BJ (cell line): ENCODE measurements at regions of chr17 and their contacts with region 1.

Region 1: DNA sequence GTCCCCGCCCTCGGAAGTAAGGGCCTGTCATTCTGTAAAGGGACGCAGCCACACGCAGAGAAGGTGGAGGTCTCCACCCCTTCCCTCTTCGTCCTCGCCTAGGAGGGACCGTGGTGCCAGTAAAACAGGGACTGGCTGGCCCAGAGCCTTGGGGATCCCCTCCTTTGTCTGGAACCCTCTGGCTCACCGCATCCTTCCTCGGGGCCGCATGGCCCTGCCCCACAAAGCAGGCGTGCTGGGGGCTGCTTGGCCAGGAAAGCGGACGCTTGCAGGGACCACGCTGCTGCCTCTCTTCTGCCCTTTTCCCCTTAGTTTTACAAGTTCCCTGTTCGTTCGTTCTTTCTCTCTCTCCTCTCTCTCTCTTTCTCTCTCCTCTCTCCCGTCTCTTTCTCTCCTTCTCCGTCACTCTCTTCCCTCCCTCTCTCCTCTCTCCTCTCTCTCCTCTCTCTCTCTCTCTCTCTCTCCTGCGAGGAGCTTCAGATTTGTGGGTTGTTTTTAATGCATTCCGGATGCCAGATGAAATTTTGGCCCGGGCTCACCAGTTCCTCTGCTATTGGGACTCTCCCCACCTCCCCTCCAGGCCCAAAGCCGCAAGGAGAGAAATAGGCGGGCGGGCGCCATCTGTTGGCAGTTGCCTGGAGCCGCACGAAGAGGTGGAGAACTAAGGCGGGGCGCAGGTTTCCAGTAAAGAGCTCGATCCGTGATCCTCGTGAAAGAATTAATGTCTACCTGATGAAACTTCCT is 35.1 kb upstream of the CDRT4 start:
- DNase-seq: peak; percentile 81
- H3K4me3 ChIP-seq: peak overlapping the region; percentile 23
- H3K27me3 ChIP-seq: no peaks in the 10 kb centered on the region
- CTCF ChIP-seq: peak; percentile 95

Region 2: DNA sequence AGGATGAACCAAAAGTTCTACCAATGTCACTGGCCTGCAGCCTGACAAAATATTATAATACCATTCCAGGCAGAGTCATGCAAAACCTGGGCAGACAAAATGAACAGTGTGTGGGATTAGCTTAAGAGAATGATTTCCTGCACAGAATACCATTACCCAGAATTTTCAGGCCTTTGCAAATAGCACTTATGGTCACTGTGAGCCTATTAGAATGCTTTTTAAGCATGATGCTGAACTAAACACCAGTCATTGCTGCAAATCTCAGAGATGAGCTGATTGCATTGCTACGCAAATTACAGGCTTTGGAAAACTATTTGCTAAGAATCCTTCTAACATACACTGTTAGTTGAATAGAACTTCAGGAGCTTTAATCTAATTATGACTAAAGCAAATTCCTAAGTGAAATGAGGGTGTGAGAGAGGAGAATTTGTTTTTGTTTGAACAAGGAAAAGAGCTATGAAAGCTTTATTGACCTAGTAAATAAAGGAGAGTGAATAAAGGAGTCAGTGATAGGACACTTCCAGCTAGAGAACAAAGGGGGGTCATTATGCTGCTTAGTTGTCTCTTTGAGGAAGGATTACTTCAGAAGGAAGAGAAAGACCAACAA is 802.9 kb before region 1 on chr17:
- CTCF ChIA-PET with region 1: no interaction called
- POLR2A ChIA-PET with region 1: no interaction called
- DNase-seq: no peak
- H3K4me3 ChIP-seq: no peak overlapping the region
- H3K27me3 ChIP-seq: no peaks in the 10 kb centered on the region; the same call in 1 of the 2 replicates
- CTCF ChIP-seq: no peak

Region 3: DNA sequence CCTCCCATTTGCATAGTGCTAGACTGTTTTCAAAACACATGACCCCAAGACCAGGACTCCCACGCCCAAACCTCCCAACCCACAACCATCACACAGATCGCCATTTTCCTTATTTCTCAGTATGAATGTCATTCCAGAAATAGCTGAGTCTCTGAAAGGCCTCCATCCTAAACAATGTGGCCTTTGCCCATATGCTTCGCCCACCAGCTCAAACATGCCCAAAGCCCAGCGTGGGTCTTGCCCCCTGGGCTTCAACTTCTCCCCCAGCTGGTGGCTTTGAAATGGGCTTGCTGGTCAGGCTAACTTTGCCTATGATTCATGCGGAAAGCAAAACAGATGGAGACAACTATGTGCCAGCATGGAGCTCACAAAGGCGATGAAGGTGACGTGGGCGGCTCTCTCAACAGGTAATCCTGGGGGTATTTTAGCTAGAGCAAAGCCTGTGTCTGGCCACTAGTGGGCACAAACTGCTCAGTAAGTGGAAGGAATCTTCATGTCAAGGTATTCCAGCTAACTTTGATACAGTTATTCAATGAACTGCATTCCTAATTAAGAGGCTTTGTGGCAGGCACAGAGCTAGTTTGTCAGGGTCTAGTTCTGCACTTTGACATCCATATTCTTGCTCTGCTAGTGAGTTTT is 254.5 kb before region 1 on chr17:
- CTCF ChIA-PET with region 1: interaction called, 12 read pairs
- POLR2A ChIA-PET with region 1: interaction called, 4 read pairs
- DNase-seq: no peak
- H3K4me3 ChIP-seq: no peak overlapping the region
- H3K27me3 ChIP-seq: no peaks in the 10 kb centered on the region
- CTCF ChIP-seq: peak; percentile 42; the same call in 1 of the 2 replicates

Region 4: DNA sequence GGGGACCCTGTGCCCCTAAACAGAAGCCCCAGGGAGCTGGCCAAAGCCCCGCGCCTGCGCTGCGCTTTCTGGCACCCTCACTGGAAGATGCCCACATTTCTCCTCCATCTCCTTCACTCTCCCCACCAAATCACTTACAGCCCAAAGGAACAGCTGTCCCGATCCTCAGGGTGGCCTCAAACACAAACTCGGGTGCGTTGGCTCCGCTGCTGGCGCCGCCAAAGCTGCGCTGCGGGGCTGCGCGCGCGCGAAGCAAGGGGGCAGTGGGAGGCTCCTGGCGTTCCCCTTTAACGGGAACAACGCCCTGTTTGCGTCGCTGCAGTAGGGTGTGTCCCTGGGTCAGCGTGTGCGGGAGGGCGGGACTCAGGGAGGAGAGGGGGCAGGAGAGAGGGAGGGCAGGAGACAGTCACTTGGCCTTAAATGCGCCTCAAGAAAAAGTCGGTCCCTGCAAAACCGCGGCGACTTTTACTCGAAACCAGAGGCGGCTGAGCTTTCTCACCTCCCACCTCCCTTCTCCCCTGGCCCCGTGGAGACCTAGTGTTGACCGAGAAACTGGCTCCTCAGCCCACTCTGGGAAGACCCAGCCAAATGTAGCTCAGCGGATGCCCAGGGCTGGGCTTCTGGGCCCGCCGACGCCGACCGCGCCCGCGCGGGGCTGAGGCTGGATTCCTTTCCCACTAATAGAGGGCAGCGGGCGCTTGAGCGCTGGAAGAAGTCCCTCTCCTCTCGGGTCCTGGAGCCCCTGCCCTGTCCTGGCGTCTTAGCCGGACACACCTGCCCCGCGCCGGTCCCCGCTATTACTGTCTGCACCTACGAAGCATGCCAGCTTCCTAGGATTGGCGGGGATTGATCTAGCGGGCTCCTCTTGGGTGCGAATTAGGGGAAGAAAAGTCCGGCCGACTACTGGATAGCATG is 240.0 kb before region 1 on chr17:
- CTCF ChIA-PET with region 1: interaction called, 43 read pairs
- POLR2A ChIA-PET with region 1: interaction called, 3 read pairs
- DNase-seq: peak; percentile 76
- H3K4me3 ChIP-seq: peak overlapping the region; percentile 72
- H3K27me3 ChIP-seq: peaks cover 7% of the 10 kb centered on the region
- CTCF ChIP-seq: peak; percentile 60

Region 5: DNA sequence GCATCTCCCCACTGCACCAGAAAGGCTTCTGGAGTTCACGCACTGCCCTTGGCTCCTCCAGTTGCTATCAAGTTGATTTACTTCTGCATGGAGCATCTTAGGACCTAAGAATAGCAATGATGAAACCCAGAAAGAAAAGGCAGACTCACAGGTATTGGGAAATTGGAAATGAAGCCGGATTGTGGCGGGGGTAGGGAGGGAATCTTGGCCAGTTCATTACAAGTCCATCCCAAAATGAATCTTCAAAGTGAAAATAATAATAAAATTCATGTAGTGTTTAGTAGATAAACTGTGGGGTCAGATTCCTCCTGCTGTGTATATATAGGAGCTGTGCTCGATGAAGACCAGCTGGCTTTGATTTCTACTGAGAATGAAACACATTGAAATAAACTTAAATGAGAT is 194.8 kb before region 1 on chr17:
- CTCF ChIA-PET with region 1: no interaction called
- POLR2A ChIA-PET with region 1: no interaction called
- DNase-seq: no peak
- H3K4me3 ChIP-seq: no peak overlapping the region
- H3K27me3 ChIP-seq: peaks cover 2% of the 10 kb centered on the region; the same call in 1 of the 2 replicates
- CTCF ChIP-seq: no peak

Region 6: DNA sequence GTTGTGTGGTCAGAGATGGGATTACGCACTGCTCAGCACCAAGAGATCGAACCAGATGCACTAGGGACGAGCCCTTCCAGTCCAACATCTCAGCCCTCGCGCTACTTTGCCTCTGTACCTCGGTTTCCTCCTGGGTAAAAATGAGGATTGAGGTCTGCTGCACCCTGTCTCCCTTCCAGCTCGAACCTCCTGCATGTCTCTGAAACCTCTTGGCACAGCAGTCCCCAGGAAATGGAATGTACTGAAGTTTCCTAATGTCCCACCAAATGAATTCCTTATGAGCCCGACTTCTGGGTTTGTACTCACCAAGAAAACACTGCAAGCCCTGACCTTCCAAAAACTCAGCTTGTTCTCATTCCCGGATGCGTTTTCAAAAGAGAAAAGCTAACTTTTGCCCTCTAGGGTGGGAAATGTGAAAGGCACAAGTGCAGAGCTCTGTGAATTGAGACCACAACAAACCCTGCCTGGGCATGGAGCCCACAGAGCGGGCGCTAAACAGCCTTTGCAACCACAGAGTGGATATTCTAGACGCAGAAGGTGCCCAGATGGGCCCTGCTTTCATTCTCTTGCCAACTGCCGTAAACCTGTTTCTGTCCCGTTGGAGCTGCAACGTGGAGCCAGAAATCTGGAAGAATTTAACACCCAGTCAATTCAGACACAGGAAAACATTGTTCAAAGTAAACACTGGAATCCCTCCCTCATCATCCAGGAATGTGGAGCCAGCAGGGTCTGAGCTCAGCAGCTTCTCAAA is 45.4 kb before region 1 on chr17:
- CTCF ChIA-PET with region 1: interaction called, 21 read pairs
- POLR2A ChIA-PET with region 1: no interaction called
- DNase-seq: peak; percentile 93
- H3K4me3 ChIP-seq: no peak overlapping the region
- H3K27me3 ChIP-seq: no peaks in the 10 kb centered on the region
- CTCF ChIP-seq: peak; percentile 64

Region 7: DNA sequence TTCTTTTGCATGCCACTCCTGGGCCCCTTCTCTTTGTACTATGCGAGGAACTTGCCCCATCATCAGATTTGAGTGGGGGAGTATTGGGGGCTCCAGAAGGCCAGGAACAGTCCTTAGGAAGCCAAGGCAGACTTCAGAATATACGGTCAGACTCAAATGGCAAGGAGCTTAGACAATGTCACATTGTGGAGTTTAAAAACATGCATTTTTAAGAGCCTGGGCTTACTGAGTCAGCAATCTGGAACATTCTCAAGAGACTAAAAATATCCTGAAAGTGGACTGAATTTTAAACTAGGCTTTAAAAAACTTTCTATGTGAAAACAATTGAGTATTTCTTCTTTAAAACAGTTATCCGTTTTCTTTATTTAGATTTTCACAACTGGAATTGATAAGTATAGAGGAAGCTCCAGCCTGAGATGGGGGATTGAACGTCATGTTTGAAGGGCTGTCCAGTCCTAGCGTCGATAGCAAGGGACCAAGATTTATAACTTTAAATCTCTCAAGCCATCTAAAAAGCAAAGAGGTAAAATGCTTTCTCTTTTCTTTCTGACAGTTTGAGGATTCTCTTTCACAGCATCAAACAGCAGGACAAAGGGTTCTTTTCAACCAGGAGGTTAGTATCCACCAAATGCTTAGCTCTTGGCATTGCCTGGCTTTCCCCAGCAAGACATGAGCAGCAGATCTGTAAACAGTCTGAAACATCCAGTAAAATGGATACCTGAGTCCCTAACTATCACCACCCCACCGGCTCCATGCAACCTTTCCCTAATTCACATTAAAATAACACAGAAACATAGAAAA is 10.7 kb after region 1 on chr17:
- CTCF ChIA-PET with region 1: interaction called, 13 read pairs
- POLR2A ChIA-PET with region 1: no interaction called
- DNase-seq: no peak
- H3K4me3 ChIP-seq: no peak overlapping the region
- H3K27me3 ChIP-seq: no peaks in the 10 kb centered on the region
- CTCF ChIP-seq: no peak